OCI-LY7 (cell line): ENCODE measurements at regions of chr19 and their contacts with region 1.

Region 1: DNA sequence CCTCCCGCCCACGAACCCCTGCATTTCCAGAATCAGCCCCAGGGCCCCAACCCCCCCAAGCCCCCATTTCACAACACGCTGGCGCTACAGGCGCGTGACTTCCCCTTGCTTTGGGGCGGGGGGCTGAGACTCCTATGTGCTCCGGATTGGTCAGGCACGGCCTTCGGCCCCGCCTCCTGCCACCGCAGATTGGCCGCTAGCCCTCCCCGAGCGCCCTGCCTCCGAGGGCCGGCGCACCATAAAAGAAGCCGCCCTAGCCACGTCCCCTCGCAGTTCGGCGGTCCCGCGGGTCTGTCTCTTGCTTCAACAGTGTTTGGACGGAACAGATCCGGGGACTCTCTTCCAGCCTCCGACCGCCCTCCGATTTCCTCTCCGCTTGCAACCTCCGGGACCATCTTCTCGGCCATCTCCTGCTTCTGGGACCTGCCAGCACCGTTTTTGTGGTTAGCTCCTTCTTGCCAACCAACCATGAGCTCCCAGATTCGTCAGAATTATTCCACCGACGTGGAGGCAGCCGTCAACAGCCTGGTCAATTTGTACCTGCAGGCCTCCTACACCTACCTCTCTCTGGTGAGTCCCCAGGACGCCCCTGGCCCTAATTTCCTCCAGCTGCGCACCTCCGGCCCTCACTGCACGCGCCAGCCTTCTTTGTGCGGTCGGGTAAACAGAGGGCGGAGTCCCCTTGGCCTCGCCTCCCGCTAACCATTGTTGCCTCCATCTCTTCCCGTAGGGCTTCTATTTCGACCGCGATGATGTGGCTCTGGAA is at the start of gene FTL:
- DNase-seq: peak; percentile 97
- H3K4me3 ChIP-seq: peak within 1 kb of the TSS; percentile 73
- H3K27ac ChIP-seq: peak within 1 kb of the TSS; percentile 54
- H3K4me1 ChIP-seq: peaks cover 61% of the 10 kb centered on the region
- CTCF ChIP-seq: no peak
- total RNA-seq, gene FTL: 562 and 602 TPM in 2 replicates

Region 2: GRCh38 chr19:48872884-48873475 is 92.2 kb before region 1 on chr19:
- CTCF ChIA-PET with region 1: no interaction called
- POLR2A ChIA-PET with region 1: interaction called, 6 read pairs
- intact Hi-C with region 1: loop called (anchors 1 kb)
- DNase-seq: peak; percentile 89
- H3K4me3 ChIP-seq: peak overlapping the region; percentile 84
- H3K27ac ChIP-seq: peak overlapping the region; percentile 99
- H3K4me1 ChIP-seq: peaks cover 59% of the 10 kb centered on the region
- CTCF ChIP-seq: no peak

Region 3: GRCh38 chr19:48883726-48884125 is 81.5 kb before region 1 on chr19:
- CTCF ChIA-PET with region 1: interaction called, 5 read pairs
- POLR2A ChIA-PET with region 1: interaction called, 10 read pairs
- intact Hi-C with region 1: no loop called
- DNase-seq: no peak
- H3K4me3 ChIP-seq: no peak overlapping the region
- H3K27ac ChIP-seq: no peak overlapping the region
- H3K4me1 ChIP-seq: peaks cover 35% of the 10 kb centered on the region
- CTCF ChIP-seq: no peak

Region 4: DNA sequence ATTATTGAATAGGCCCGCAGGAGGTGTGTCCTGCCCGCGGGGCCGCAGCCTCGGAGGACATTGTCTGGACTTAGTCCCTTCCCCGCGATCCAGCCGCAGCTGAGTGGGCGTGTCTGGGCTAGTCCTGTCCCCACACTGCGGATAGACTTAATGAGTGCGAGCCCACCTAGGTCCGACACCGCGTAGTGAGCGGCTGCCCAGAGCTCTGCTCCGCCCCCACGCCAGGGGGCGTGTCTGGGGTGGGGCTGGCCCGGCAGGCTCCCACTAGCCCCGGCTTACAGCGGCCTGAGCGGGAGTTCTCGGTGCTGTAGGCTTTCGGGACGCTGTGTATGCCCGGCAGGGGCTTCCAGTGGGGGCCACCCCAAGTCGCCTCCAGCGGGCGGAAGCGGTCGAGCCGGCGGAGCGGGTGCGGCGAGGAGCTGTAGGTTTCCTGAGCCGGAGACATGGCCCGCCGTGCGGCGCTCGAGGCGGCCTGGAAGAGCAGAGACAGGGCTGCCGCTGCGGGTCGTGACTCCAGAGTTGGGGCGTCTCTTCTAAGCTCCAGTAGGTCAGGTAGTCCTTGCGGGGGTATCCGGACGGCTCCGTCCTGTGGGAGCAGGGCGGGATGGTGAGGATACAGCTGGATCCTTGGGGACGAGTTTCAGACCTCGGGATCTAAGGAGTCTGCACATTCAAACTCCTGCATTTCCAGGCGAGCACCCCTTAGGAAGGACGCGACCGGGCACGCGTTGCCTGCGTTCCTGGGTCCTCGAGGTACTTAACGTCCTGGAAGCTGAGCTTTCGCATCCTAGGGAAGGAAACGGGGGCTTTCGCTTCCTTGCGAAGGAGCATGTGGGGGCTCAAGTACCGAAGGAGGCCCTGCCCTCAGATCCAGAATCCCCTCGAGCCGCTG is 91.0 kb after region 1 on chr19:
- CTCF ChIA-PET with region 1: no interaction called
- POLR2A ChIA-PET with region 1: no interaction called
- intact Hi-C with region 1: no loop called
- DNase-seq: peak; percentile 27
- H3K4me3 ChIP-seq: peak overlapping the region; percentile 42
- H3K27ac ChIP-seq: no peak overlapping the region
- H3K4me1 ChIP-seq: no peaks in the 10 kb centered on the region
- CTCF ChIP-seq: no peak; the same call in 1 of the 2 replicates